PC-3 (cell line): ENCODE measurements at regions of chr14 and their contacts with region 1.

Region 1: DNA sequence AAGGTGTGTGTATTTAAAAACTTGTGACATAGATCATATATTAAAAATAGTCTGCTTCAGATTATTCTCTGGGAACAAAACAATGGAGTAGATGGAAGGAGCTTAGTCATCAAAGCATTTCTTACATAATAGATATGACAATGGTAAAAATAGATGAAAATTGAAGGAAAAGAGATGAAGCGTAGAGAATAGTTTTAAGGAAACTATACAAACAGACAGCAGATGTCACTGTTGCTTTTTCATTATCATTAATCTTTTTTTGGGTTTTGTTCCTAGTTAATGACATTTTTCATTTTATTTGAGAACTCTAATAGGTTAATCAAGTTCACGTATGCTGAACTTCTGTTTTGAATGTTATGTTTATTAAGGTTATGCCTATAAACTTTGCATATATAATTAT is 149.2 kb upstream of the FBXO33 start:
- DNase-seq: peak; percentile 21
- ATAC-seq: no peak
- H3K4me3 ChIP-seq: no peak overlapping the region
- H3K27ac ChIP-seq: no peak overlapping the region
- H3K4me1 ChIP-seq: 0 out of 2 replicates have a peak, but pooled peaks cover 4% of the 10 kb centered on the region
- H3K27me3 ChIP-seq: 0 out of 2 replicates have a peak, but pooled peaks cover 10% of the 10 kb centered on the region
- CTCF ChIP-seq: peak; percentile 63

Region 2: GRCh38 chr14:39607978-39608377 is 26.5 kb after region 1 on chr14:
- CTCF ChIA-PET with region 1: no interaction called
- POLR2A ChIA-PET with region 1: interaction called, 31 read pairs
- intact Hi-C with region 1: no loop called
- DNase-seq: no peak
- ATAC-seq: no peak
- H3K4me3 ChIP-seq: no peak overlapping the region
- H3K27ac ChIP-seq: no peak overlapping the region
- H3K4me1 ChIP-seq: no peaks in the 10 kb centered on the region
- H3K27me3 ChIP-seq: no peaks in the 10 kb centered on the region
- CTCF ChIP-seq: no peak